BJ (cell line): ENCODE measurements at regions of chr18 and their contacts with region 1.

Region 1: GRCh38 chr18:54671291-54671881 is 80.3 kb downstream of the DYNAP start:
- DNase-seq: no peak
- H3K4me3 ChIP-seq: no peak overlapping the region
- H3K27me3 ChIP-seq: no peaks in the 10 kb centered on the region
- CTCF ChIP-seq: peak; percentile 53

Region 2: DNA sequence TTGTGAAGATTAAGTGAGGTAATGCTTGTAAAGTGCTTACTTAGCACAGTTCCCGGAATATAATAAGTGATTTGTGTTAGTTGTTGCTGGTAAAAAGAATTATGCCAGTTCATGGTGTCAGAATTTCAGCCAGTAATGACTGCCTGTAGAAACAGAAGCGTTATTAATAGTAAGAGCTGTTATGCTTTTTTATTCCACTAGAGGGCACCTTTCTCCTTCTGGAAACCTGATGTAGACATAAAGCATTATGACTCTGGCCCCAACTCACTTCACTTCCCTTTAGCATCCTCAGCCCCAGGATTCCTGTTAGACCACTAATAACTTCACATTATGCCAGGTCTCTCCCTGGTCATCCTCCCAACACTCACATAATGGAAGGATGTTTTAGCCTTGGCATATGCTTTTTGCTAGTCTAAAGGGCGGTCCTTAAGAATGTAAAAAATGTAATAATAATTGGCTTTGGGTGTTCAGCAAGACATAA is 278.8 kb before region 1 on chr18:
- CTCF ChIA-PET with region 1: interaction called, 16 read pairs
- POLR2A ChIA-PET with region 1: no interaction called
- DNase-seq: no peak
- H3K4me3 ChIP-seq: no peak overlapping the region
- H3K27me3 ChIP-seq: no peaks in the 10 kb centered on the region
- CTCF ChIP-seq: peak; percentile 69

Region 3: DNA sequence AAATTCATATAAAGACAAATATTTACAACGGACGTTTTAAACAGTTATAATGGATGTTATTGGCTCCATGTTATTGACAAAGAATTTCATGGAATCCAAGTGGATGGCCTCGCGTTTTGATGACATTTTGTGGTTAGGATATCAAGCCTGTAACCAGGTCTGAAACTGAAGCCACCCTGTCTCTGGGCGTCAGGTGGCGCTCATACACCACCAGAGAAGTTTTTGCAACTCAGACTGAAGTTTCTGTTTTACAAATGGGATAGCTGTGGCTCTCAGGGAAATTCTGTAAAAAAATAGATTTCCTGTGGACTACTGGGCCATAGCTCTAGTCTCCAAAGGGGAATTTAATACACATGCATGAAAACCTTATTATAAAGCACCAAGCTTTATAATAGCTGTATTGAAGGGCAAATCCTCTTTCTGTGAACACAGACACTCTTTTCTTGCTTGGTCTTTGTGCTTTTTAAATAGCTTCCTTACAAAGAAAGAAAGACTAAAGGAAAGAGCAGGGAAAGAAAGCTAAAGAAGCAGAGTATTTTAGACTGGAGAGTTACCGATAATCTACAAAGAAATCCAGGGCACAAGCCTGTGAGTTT is 227.0 kb before region 1 on chr18:
- CTCF ChIA-PET with region 1: interaction called, 16 read pairs
- POLR2A ChIA-PET with region 1: no interaction called
- DNase-seq: peak; percentile 1
- H3K4me3 ChIP-seq: no peak overlapping the region
- H3K27me3 ChIP-seq: peaks cover 3% of the 10 kb centered on the region; the same call in 1 of the 2 replicates
- CTCF ChIP-seq: peak; percentile 75